HEK293 (cell line): ENCODE measurements at regions of chr20 and their contacts with region 1.

Region 1: DNA sequence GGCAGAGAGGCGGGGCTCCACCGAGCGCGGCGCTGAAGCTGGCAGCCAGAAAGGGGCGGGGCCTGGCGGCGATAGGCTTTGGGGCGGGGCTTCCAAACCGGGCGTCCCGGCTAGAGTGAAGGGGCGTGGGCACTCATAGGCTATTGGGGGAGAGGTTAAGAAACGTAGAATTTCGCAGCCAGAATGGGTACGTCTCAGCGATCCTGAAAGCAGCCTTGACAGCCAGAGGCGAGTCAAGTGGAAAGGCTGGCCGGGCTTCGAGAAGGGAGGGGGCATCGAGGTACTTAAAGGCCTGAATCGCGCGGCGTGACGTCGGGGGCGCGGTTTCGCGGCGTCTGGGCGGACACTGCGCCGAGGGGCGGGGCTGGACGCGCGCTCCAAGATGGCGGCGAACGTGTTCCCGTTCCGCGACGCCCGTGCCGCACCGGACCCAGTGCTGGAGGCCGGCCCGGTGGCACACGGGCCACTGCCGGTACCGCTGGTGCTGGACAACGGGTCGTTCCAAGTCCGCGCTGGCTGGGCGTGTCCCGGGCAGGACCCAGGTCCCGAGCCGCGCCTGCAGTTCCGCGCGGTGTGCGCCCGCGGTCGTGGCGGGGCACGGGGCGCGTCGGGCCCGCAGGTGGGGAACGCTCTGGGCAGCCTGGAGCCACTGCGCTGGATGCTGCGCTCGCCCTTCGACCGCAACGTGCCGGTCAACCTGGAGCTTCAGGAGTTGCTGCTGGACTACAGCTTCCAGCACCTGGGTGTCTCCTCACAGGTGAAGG is at the start of gene ACTR5:
- H3K4me3 ChIP-seq: peak within 1 kb of the TSS; percentile 88
- H3K27ac ChIP-seq: peak within 1 kb of the TSS; percentile 39; the same call in 1 of the 2 replicates
- H3K4me1 ChIP-seq: no peaks in the 10 kb centered on the region
- CTCF ChIP-seq: no peak

Region 2: DNA sequence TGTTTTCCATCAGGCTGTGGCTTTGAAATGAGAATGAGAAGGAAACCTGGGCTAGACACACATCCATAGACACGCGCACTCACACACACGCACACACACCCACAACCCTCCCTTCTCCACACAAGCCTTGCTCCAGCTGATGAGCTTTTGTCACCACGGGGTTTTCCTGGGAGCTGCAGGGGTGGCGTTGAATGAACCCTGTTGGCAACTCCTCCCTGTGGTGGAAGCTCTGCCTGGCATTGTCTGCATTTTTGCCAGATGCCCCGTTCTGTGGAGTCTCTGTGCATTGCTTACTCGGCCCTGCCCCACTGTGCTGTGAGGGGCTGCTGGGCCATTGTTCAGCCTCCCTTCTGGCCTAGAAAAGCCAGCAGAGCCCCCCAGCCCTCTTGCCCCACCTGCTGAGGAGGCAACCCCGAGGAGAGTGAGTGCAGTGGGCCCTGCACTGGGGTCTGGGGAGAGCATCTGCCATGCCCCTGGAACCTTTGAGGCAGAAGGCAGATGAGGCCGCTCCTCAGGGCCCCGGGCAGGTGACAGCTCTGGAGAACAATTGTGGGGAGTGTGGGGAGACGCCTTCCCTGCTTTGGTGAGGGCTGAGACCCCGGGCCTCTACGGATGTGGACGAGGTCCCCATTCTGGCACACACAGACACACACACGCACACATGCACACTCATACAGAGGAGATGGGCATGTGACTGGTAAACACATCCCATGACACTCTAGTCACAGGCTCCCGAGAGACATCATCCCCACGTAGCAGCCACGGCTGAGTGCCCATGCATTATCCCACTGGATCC is 157.4 kb before region 1 on chr20:
- CTCF ChIA-PET with region 1: no interaction called
- POLR2A ChIA-PET with region 1: no interaction called
- H3K4me3 ChIP-seq: no peak overlapping the region
- H3K27ac ChIP-seq: no peak overlapping the region
- H3K4me1 ChIP-seq: no peaks in the 10 kb centered on the region
- CTCF ChIP-seq: no peak

Region 3: GRCh38 chr20:38658879-38659596 is 89.2 kb before region 1 on chr20:
- CTCF ChIA-PET with region 1: interaction called, 15 read pairs
- POLR2A ChIA-PET with region 1: no interaction called
- H3K4me3 ChIP-seq: no peak overlapping the region
- H3K27ac ChIP-seq: no peak overlapping the region
- H3K4me1 ChIP-seq: no peaks in the 10 kb centered on the region
- CTCF ChIP-seq: peak; percentile 26; the same call in 1 of the 2 replicates

Region 4: GRCh38 chr20:38764567-38765355 is 16.5 kb after region 1 on chr20:
- CTCF ChIA-PET with region 1: interaction called, 16 read pairs
- POLR2A ChIA-PET with region 1: no interaction called
- H3K4me3 ChIP-seq: no peak overlapping the region
- H3K27ac ChIP-seq: no peak overlapping the region
- H3K4me1 ChIP-seq: no peaks in the 10 kb centered on the region
- CTCF ChIP-seq: no peak

Region 5: GRCh38 chr20:38790200-38791053 is 42.1 kb after region 1 on chr20:
- CTCF ChIA-PET with region 1: interaction called, 15 read pairs
- POLR2A ChIA-PET with region 1: no interaction called
- H3K4me3 ChIP-seq: no peak overlapping the region
- H3K27ac ChIP-seq: no peak overlapping the region
- H3K4me1 ChIP-seq: no peaks in the 10 kb centered on the region
- CTCF ChIP-seq: peak; percentile 46